Activated naive CD4-positive, alpha-beta T cell treated with anti-CD3 and anti-CD28 coated beads for 36 hours (primary cell): ENCODE measurements at regions of chr4 and their contacts with region 1.

Region 1: DNA sequence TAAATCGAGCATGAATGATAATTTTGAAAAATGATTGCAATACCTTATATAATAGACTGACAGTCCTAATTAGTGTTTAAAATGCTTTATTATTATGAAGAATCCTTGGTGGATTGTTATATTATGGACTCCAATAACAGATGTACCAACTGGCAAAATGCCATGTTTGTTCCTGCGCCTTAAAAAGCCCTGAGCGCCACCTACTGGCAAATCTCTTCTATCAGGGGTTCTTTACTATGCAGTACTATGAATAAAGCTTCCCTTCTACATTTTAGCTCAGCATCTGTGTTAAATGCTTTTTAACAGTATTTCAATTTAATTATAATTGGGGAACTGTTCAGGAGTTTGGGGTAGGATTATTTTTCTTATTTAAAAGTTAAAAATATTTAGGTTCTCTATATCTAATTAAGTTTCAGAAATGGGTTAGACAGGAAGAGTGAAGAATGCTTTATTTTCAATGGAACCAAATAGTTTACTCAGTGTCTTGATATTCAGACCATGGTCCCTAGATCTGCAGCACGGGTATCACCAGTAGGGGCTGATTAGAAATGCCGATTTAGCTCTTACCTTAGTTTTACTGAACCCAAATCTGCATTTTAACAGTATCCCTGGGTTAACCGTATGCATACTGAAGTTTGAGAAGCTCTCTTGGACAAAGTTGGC is 20.1 kb downstream of the CFAP97 start:
- DNase-seq: peak; percentile 88
- H3K4me3 Mint-ChIP-seq: no peak overlapping the region
- H3K27ac Mint-ChIP-seq: no peak overlapping the region
- H3K4me1 Mint-ChIP-seq: peaks cover 50% of the 10 kb centered on the region
- H3K27me3 Mint-ChIP-seq: no peaks in the 10 kb centered on the region

Region 2: DNA sequence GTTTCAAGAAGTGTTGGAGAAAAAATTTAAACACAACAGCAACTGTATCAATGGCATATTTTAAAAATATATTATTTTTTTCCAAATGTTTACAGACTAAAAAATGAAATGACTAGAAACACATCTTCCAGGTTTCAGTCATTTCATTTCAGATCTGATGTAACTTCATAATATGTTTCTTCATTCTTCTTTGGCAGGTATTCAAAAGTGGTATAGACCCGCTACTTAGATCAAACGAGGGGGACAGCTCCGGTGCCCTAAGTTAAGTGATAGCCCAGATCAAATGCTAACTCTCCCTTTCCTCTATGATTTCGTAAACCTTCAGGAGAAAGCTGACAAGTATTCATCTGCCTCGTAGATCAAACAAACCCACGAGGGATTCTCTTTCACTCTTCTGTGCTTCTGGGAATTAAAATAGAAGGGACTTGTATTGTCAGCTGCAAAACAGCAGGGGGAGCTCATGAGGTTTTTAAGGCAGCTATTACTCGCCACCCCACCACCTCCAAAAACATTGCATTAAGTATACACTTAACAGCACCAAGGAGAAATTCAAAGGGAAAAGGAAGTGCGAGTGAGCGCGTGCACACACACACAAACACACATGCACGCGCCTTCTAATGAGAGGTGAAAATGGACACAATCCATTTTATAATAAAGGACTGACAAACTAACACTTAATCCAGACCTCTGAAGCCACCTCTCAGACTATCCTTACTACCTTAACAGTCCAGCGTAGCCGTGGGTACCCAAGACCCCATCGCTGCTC is 144.1 kb before region 1 on chr4:
- CTCF ChIA-PET with region 1: interaction called, 19 read pairs
- intact Hi-C with region 1: loop called (anchors 1 kb)
- DNase-seq: peak; percentile 71
- H3K4me3 Mint-ChIP-seq: peak overlapping the region; percentile 67
- H3K27ac Mint-ChIP-seq: peak overlapping the region; percentile 63
- H3K4me1 Mint-ChIP-seq: peaks cover 2% of the 10 kb centered on the region
- H3K27me3 Mint-ChIP-seq: no peaks in the 10 kb centered on the region

Region 3: DNA sequence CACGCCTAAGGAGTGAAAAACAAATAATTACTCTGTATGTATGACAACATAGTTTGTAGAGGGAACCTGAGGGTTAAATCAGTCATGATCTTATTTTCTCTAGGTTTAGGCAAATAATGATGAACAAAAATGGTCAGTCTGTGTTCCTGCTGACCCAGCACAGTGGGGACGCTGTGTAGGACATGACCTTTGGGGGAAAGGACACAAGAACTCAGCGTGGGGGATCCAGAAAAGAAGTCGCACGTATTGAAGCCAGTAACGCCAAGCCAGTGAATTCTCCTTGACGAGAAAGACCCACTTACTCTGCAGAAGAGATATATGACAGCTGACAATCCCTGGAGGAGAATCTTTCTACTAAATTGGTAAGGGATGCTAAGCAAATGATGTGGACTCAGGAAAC is 128.9 kb before region 1 on chr4:
- CTCF ChIA-PET with region 1: no interaction called
- intact Hi-C with region 1: no loop called
- DNase-seq: no peak
- H3K4me3 Mint-ChIP-seq: no peak overlapping the region
- H3K27ac Mint-ChIP-seq: no peak overlapping the region
- H3K4me1 Mint-ChIP-seq: no peaks in the 10 kb centered on the region
- H3K27me3 Mint-ChIP-seq: peaks cover 9% of the 10 kb centered on the region

Region 4: DNA sequence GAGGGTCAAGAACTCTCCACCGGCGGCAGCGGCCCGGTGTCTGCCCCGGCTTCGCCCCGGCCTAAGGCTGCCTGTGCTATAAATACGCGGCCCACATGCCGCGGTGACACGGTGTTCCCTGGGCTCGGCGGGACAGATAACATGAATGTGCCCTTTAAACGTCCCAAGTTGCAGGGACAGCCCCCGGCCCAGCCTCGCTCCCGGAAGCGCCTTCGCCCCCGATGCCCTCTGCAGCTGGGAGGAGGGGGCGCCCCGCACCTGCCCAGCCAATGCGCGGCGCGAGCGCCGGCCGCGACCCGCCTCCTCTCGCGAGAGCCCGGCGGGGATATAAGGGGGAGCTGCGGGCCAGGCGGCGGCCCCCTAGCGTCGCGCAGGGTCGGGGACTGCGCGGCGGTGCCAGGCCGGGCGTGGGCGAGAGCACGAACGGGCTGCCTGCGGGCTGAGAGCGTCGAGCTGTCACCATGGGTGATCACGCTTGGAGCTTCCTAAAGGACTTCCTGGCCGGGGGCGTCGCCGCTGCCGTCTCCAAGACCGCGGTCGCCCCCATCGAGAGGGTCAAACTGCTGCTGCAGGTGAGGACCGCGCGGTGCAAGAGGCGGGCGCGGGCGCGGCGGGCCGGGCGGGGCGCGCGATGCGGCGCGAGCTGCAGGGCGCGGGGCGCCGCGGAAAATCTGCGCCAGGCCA is 40.7 kb before region 1 on chr4 and contains the start of gene SLC25A4:
- CTCF ChIA-PET with region 1: interaction called, 6 read pairs
- intact Hi-C with region 1: loop called (anchors 2 kb)
- DNase-seq: peak; percentile 87
- H3K4me3 Mint-ChIP-seq: peak within 1 kb of the TSS; percentile 83
- H3K27ac Mint-ChIP-seq: no peak within 1 kb of the TSS
- H3K4me1 Mint-ChIP-seq: peaks cover 13% of the 10 kb centered on the region
- H3K27me3 Mint-ChIP-seq: peaks cover 11% of the 10 kb centered on the region
- total RNA-seq, gene SLC25A4: 4.3 to 5.0 TPM

Region 5: DNA sequence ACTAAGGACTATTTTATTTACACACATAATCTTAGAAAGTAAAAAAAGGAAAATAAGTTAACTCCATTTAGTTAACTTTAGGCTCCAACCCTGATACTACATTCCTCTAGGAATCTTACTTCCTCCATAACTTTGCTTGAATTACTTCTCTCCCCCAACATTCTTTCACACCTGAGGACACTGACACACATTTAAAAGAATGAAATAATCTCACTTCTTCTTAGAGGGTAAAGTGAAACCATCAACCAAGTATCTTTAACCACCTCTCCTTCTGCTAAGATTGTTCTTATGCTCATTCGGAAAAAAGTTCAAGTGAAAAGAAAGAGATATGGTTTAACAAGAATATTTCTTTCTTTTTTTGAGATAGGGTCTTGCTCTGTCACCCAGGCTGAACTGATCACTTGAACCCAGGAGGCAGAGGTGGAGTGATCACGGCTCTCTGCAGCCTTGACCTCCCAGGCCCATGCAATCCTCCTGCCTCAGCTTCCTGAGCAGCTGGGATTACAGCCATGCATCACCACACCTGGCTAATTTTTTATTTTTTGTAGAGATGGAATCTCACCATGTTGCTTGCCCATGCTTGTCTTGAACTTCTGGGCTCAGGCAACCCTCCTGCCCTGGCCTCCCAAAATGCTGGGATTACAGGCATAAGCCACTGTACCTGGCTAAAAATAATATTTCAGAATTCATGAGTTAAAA is 12.2 kb before region 1 on chr4:
- CTCF ChIA-PET with region 1: interaction called, 26 read pairs
- intact Hi-C with region 1: no loop called
- DNase-seq: no peak
- H3K4me3 Mint-ChIP-seq: no peak overlapping the region
- H3K27ac Mint-ChIP-seq: no peak overlapping the region
- H3K4me1 Mint-ChIP-seq: peaks cover 4% of the 10 kb centered on the region
- H3K27me3 Mint-ChIP-seq: no peaks in the 10 kb centered on the region

Region 6: DNA sequence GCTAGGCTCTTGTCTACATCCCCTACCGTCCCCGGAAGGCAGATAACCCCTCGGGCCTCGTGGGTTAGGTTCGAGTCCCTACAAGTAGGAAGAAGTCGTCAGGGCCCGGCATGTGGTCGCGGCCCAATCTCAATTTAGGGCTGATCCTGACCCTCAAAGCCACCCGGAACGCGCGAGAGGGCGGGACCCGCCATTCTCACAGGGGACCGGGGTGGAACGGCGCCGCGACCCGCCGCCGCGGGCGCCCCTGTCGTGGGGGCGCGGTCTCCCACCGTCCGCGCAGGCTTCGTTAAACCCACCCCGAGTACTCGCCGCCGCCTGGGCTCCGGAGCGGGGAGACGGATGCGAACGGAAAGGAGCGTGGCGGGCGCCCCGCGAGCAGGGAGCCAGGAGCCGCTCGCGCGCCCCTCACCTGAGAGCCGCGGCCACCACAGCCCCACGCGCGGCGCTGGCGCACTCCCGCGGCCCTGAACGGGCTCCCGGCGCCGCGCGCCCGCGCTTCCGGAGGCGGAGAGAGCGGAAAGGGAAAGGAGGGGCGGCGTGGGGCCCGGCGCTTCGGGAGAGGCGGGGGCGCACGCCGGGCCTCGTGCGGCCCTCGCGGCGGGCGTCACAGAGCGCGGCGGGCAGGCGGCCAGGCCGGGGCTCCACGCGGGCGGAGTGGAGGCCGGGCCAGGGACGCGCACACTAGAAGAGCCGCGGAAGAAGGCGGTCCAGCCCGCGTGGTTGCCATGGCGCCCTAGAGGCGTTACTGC is 19.9 kb after region 1 on chr4 and contains the start of gene CFAP97:
- CTCF ChIA-PET with region 1: interaction called, 10 read pairs
- intact Hi-C with region 1: no loop called
- DNase-seq: peak; percentile 73
- H3K4me3 Mint-ChIP-seq: peak within 1 kb of the TSS; percentile 96
- H3K27ac Mint-ChIP-seq: peak within 1 kb of the TSS; percentile 96
- H3K4me1 Mint-ChIP-seq: peaks cover 32% of the 10 kb centered on the region
- H3K27me3 Mint-ChIP-seq: no peaks in the 10 kb centered on the region
- total RNA-seq, gene CFAP97: 38.4 to 43.6 TPM